ENCODE measurements at regions of chr7 and their contacts with region 1.

Region 1: DNA sequence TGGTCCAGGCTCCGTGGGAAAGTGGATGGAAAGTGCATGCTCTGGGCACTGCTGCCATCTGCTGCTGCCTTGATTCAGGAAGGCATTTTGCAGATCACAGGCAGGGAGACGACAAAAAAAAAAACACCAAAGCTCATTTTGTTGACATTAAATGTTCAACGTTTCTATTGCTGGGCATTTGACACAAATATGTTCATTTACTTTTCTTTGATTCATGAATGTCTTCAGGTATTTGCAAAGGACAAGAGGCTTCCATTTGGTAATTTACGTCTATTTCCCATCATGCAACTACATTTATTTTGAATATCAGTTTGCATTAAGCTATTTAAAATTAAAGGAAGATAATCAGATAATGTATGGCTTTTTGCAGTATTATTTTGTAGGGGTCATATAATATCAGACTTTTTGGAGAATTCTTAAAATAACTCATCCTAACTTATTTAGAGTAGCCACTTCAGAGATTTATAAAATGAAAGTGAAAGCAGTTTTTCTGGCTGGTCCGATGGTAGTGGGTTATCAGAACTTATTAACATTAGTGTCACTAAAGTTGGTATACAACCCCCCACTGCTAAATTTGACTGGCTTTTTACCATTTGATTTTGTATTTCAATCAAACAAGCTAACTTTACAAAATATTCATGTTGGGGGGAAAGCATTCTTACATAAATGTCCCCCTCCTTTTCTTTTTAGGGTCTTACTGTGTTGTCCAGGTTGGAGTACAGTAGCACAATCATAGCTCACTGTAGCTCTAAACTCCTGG is 65.3 kb downstream of the PDIA4 start:
- DNase-seq: peak; percentile 76
- ATAC-seq: peak; percentile 86

Region 2: GRCh38 chr7:148503875-148504487 is 459.0 kb before region 1 on chr7:
- intact Hi-C with region 1: loop called (anchors 10 kb)
- DNase-seq: no peak
- ATAC-seq: no peak

Region 3: GRCh38 chr7:148575640-148576411 is 387.2 kb before region 1 on chr7:
- intact Hi-C with region 1: loop called (anchors 2 kb)
- DNase-seq: peak; percentile 81
- ATAC-seq: peak; percentile 70

Measured in left ventricle myocardium superior (tissue), 1 donor.